ENCODE measurements at regions of chr4 and their contacts with region 1.

Region 1: GRCh38 chr4:7802093-7802726 is 137.5 kb downstream of the AFAP1 start:
- DNase-seq: peak; percentile 43 to 53 (median 46)
- H3K4me3 ChIP-seq: no peak overlapping the region
- H3K4me3 Mint-ChIP-seq: no peak overlapping the region
- H3K27ac ChIP-seq: no peak overlapping the region
- H3K27ac Mint-ChIP-seq: no peak overlapping the region
- H3K4me1 ChIP-seq: no peaks in the 10 kb centered on the region
- H3K4me1 Mint-ChIP-seq: peaks cover 1% of the 10 kb centered on the region
- H3K27me3 ChIP-seq: no peaks in the 10 kb centered on the region
- H3K27me3 Mint-ChIP-seq: peaks cover 3 to 11% (median 7%) of the 10 kb centered on the region in 3 donors
- CTCF ChIP-seq: peak; percentile 91

Region 2: DNA sequence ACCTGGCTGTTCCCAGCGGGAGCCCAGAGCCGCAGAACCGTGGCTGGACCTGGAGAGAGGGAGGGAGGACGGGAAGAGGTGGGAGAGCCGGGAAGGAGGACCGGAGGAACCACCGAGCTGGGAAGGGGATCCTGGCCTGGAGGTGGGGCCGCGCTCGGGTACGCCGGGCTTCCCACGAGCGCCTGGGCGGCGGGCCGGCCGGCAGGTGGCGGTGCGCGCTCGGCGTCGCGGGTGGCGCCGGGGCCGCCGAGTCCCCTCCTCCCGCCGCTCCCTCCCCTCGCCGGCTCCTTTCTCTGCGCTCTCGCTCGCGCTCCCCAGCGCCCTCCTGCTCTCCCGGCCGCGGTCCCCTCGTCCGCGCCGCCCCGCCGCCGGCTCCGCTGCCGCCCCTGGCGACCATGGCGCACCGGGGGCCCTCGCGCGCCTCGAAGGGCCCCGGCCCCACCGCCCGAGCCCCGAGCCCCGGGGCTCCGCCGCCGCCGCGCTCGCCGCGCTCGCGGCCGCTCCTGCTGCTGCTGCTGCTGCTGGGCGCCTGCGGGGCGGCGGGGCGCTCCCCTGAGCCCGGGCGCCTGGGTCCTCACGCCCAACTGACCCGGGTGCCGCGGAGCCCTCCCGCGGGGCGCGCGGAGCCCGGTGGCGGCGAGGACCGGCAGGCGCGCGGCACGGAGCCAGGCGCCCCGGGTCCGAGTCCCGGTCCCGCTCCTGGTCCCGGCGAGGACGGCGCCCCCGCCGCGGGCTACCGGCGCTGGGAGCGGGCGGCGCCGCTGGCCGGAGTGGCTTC is 609.8 kb before region 1 on chr4 and contains the start of gene SORCS2:
- intact Hi-C with region 1: loop called in 1 of 2 experiments (anchors 5 kb)
- DNase-seq: no peak
- H3K4me3 ChIP-seq: no peak within 1 kb of the TSS
- H3K4me3 Mint-ChIP-seq: peak within 1 kb of the TSS in 1 of 2 donors; percentile 75
- H3K27ac ChIP-seq: no peak within 1 kb of the TSS
- H3K27ac Mint-ChIP-seq: no peak within 1 kb of the TSS
- H3K4me1 ChIP-seq: no peaks in the 10 kb centered on the region
- H3K4me1 Mint-ChIP-seq: no peaks in the 10 kb centered on the region
- H3K27me3 ChIP-seq: peaks cover 12 to 36% of the 10 kb centered on the region in 2 donors
- H3K27me3 Mint-ChIP-seq: peaks cover 37 to 67% (median 49%) of the 10 kb centered on the region in 3 donors
- CTCF ChIP-seq: peak; percentile 46
- polyA plus RNA-seq, gene SORCS2: 0.46 to 0.55 TPM in 2 of 3 donors, not detected in the other

Region 3: DNA sequence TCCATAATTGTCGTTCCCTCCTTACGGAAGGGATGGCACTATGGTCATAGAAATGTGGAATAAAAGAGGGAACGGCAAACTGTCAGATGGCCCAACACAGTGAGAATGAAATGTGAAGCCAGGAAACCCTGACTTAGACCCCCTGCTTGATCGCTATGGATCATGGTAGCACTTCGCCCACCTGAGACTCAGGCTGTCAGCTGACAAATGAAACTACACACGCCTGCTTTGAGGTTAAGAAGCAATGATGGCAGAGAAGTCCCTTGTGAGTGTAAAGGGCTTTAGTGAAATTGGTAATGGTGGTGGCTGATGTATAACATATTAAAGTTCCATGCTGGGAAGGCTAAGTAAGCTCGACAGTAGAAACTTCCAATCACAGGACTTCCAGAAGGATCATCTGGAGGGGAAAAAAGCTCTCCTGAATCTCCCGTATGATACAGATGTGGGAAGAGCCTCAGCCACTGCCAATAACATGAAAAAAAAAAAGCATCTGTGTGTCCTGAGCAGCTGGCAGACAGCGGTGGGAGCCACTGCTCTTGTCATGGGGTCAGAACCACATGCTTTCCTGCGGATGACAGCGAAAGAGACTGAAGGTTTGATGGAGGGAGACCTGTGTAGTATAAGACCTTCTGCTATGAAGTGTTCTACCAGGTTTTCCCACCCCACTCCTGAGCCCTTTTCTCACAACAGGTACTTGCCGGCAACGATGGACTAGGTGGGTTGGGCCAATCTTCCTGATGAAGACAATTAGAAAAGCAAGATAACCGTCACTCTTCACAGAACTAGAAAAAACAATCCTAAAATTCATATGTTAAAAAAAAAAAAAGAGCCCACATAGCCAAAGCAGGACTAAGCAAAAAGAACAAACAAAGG is 29.9 kb after region 1 on chr4:
- intact Hi-C with region 1: no loop called
- DNase-seq: no peak
- H3K4me3 ChIP-seq: no peak overlapping the region
- H3K4me3 Mint-ChIP-seq: no peak overlapping the region
- H3K27ac ChIP-seq: no peak overlapping the region
- H3K27ac Mint-ChIP-seq: no peak overlapping the region
- H3K4me1 ChIP-seq: peaks cover 12 to 13% of the 10 kb centered on the region in 2 donors
- H3K4me1 Mint-ChIP-seq: peaks cover 23% of the 10 kb centered on the region
- H3K27me3 ChIP-seq: no peaks in the 10 kb centered on the region
- H3K27me3 Mint-ChIP-seq: peaks cover 0 to 4% (median 2%) of the 10 kb centered on the region in 3 donors
- CTCF ChIP-seq: no peak

Region 4: GRCh38 chr4:7987148-7987989 is 185.2 kb after region 1 on chr4:
- intact Hi-C with region 1: loop called in 1 of 2 experiments (anchors 2 kb)
- DNase-seq: peak; percentile 6 to 45 (median 6)
- H3K4me3 ChIP-seq: no peak overlapping the region
- H3K4me3 Mint-ChIP-seq: no peak overlapping the region
- H3K27ac ChIP-seq: no peak overlapping the region
- H3K27ac Mint-ChIP-seq: peak overlapping the region in 1 of 7 donors; percentile 34
- H3K4me1 ChIP-seq: no peaks in the 10 kb centered on the region
- H3K4me1 Mint-ChIP-seq: no peaks in the 10 kb centered on the region
- H3K27me3 ChIP-seq: peaks cover 0 to 6% of the 10 kb centered on the region in 2 donors
- H3K27me3 Mint-ChIP-seq: peaks cover 7 to 20% (median 16%) of the 10 kb centered on the region in 3 donors
- CTCF ChIP-seq: peak; percentile 70